SK-N-SH (cell line): ENCODE measurements at regions of chr14 and their contacts with region 1.

Region 1: GRCh38 chr14:100736234-100737180 is 9.8 kb downstream of the DLK1 start:
- DNase-seq: peak; percentile 69
- H3K4me3 ChIP-seq: no peak overlapping the region
- H3K27ac ChIP-seq: peak overlapping the region in 1 of 2 experiments; percentile 17; a peak in 2 of 4 replicates
- H3K4me1 ChIP-seq: peaks cover 0 to 40% of the 10 kb centered on the region in 2 experiments; a peak in 1 of 4 replicates
- H3K27me3 ChIP-seq: no peaks in the 10 kb centered on the region
- CTCF ChIP-seq: no peak
- EP300 ChIP-seq: no peak
- RAD21 ChIP-seq: no peak

Region 2: DNA sequence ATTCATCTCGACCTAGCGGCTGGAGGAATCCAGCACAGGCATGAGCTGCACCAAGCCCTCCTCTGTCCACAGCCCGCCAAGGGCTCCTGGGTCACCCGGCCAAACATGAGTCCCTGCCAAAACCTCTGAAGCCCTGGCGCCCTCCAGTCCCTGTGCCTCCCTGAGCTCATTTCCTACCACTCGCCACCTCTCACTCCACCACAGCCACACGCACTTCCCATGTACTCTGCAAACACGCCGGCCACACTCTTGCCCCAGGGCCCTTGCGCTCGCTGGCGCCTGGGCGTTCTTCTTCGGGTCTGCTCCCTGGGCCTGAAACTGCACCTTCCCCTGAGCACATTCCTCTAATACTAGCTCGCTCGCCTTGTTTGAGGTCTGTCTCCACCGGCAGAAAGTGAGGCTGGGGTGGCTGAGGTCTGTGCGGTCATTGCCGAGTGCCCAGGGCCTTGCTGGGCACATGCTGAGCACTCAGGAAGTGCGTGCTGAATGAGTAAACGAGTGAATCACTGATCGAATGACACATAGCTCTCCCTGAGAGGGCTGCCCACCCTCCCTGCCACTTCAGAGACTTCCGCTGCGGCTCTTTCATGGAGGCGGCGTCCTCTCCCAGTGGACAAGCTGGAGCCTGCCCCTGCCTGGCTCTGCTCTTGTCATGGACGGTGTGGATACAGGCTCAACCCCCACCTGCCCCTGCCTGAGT is 43.5 kb before region 1 on chr14:
- CTCF ChIA-PET with region 1: no interaction called
- POLR2A ChIA-PET with region 1: interaction called, 37 read pairs
- DNase-seq: no peak
- H3K4me3 ChIP-seq: peak overlapping the region in 1 of 2 experiments; percentile 44; a peak in 2 of 4 replicates
- H3K27ac ChIP-seq: peak overlapping the region; percentile 91 to 94
- H3K4me1 ChIP-seq: peaks cover 55 to 83% of the 10 kb centered on the region in 2 experiments
- H3K27me3 ChIP-seq: no peaks in the 10 kb centered on the region
- CTCF ChIP-seq: no peak
- EP300 ChIP-seq: peak in 1 of 2 experiments; percentile 87; a peak in 2 of 4 replicates
- RAD21 ChIP-seq: no peak

Region 3: GRCh38 chr14:100783630-100784370 is 47.3 kb after region 1 on chr14:
- CTCF ChIA-PET with region 1: interaction called, 3 read pairs
- POLR2A ChIA-PET with region 1: interaction called, 30 read pairs
- DNase-seq: peak; percentile 84
- H3K4me3 ChIP-seq: no peak overlapping the region
- H3K27ac ChIP-seq: peak overlapping the region in 1 of 2 experiments; percentile 100; a peak in 2 of 4 replicates
- H3K4me1 ChIP-seq: peaks cover 0 to 87% of the 10 kb centered on the region in 2 experiments; a peak in 1 of 4 replicates
- H3K27me3 ChIP-seq: no peaks in the 10 kb centered on the region
- CTCF ChIP-seq: no peak
- EP300 ChIP-seq: peak in 1 of 2 experiments; percentile 98; a peak in 2 of 4 replicates
- RAD21 ChIP-seq: peak; percentile 23

Region 4: GRCh38 chr14:101235335-101236103 is 499.0 kb after region 1 on chr14:
- CTCF ChIA-PET with region 1: interaction called, 10 read pairs
- POLR2A ChIA-PET with region 1: interaction called, 3 read pairs
- DNase-seq: peak; percentile 95
- H3K4me3 ChIP-seq: no peak overlapping the region
- H3K27ac ChIP-seq: peak overlapping the region in 1 of 2 experiments; percentile 58; a peak in 1 of 4 replicates
- H3K4me1 ChIP-seq: peaks cover 0 to 37% of the 10 kb centered on the region in 2 experiments; a peak in 1 of 4 replicates
- H3K27me3 ChIP-seq: no peaks in the 10 kb centered on the region
- CTCF ChIP-seq: peak; percentile 70
- EP300 ChIP-seq: no peak
- RAD21 ChIP-seq: peak; percentile 93